Right cardiac atrium (tissue), 5 donors: ENCODE measurements at regions of chr2 and their contacts with region 1.

Region 1: DNA sequence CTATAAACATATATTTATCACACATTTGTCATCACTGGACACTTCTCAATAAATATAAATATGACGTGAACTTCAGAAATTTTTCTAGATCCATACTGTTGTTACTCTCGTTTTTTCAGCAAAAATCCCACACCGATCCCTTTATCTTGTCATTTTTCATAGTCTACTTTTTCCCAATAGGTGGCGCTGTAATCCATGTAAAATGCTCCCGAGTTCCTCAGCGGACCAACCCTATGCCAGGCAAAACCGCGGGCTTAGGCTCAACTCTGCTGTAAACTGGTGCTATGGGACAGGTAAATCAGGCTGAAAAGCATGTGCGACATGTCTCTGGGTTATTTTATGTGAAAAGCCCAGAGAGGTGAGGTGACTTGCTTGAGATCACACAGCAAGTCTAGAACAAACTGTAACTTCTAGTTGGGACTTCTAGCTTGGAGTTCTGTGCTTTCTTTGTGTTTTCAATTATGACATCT is 104.0 kb downstream of the COBLL1 start:
- DNase-seq: peak; percentile 42 to 69 (median 66)
- ATAC-seq: peak; percentile 78 to 83
- H3K4me3 ChIP-seq: peak overlapping the region; percentile 18
- H3K27ac ChIP-seq: no peak overlapping the region
- H3K4me1 ChIP-seq: peaks cover 2% of the 10 kb centered on the region
- H3K27me3 ChIP-seq: no peaks in the 10 kb centered on the region

Region 2: GRCh38 chr2:164657129-164657528 is 80.5 kb before region 1 on chr2:
- intact Hi-C with region 1: no loop called
- DNase-seq: no peak
- ATAC-seq: no peak
- H3K4me3 ChIP-seq: no peak overlapping the region
- H3K27ac ChIP-seq: no peak overlapping the region
- H3K4me1 ChIP-seq: no peaks in the 10 kb centered on the region
- H3K27me3 ChIP-seq: no peaks in the 10 kb centered on the region

Region 3: GRCh38 chr2:164697674-164698461 is 39.8 kb before region 1 on chr2:
- intact Hi-C with region 1: no loop called
- DNase-seq: no peak
- ATAC-seq: no peak
- H3K4me3 ChIP-seq: no peak overlapping the region
- H3K27ac ChIP-seq: no peak overlapping the region
- H3K4me1 ChIP-seq: no peaks in the 10 kb centered on the region
- H3K27me3 ChIP-seq: no peaks in the 10 kb centered on the region

Region 4: DNA sequence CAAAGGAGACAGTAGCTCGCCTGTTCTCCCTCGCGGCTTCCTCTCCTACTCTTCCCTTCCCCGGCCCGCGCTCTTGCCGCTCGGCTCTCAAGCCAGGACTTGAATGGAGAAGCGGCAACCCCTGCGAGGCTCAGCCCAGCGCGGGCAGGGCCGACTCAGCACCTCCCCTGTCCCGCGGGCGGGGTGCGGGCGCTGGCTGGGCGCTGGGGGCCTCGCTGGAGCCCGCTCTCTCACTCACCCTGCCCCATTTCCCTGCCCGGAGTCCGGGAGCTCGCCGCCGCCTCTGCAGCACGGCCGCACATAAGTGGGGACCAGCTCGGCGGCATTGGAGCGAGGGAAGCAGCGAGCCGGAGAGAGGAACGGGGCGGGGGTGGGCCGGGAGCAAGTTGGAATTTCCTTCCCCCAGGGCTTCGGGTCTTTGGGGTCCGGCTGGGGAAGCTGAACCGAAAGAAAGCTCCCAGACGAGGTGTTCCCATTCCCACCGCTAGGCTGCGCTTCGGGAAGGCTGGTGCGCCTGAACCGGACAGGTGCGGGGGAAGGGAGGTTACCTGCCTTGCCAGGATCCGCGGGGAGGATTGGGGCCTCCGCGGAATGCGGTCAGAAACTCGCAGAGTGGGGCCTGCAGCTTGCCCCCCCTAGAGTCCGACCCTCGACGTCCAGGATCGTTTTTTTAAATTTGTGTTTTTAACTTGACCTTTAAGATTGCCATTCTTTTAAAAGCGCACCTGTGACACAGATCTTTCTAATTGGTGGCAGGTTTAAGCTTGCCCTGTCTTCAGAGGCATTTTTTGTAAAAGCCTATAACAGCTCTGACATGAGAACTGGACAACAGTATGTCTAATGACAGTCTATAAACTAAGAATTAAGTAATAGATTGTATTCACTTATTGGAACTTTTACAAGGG is 104.3 kb after region 1 on chr2 and contains the start of gene COBLL1:
- intact Hi-C with region 1: loop called in 3 of 4 experiments (anchors 5 to 10 kb)
- DNase-seq: peak; percentile 68 to 87 (median 87)
- ATAC-seq: peak; percentile 87 to 88
- H3K4me3 ChIP-seq: peak within 1 kb of the TSS; percentile 91
- H3K27ac ChIP-seq: peak within 1 kb of the TSS; percentile 99
- H3K4me1 ChIP-seq: no peaks in the 10 kb centered on the region
- H3K27me3 ChIP-seq: no peaks in the 10 kb centered on the region
- total RNA-seq, gene COBLL1: 7.3 to 9.2 (median 8.6) TPM

Region 5: GRCh38 chr2:164910101-164910899 is 172.7 kb after region 1 on chr2:
- intact Hi-C with region 1: loop called in 3 of 4 experiments (anchors 5 kb)
- DNase-seq: no peak
- ATAC-seq: no peak
- H3K4me3 ChIP-seq: no peak overlapping the region
- H3K27ac ChIP-seq: no peak overlapping the region
- H3K4me1 ChIP-seq: peaks cover 2% of the 10 kb centered on the region
- H3K27me3 ChIP-seq: no peaks in the 10 kb centered on the region

Region 6: DNA sequence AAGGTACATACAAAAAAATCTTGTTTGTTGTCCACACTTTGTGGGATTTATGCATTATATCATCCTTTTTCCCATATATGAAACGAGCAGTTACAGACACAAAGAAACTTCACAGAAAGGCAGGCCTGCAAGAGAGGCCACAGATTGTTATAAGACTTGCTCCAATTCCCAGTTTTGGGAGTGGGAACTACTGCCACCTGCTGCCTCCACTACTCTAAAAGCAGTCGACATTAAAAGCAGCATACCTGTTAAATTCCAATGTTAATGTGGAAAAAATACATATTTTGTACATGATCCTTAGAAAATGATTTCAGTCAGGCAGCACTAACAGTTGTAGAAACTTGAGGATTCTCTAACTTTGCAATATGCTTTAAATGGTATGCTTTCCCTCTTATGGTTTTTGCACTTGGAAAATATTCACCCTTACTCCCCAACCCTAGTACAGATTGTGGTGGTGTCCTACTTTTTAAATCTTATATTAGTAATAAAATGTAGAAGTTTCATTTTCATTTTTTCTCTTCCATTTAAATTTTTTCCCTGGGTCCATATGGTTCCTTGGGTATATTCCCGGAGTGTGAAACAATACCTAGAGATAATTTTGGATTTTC is 179.8 kb after region 1 on chr2:
- intact Hi-C with region 1: loop called (anchors 2 to 5 kb)
- DNase-seq: peak; percentile 23 to 67 (median 64)
- ATAC-seq: no peak
- H3K4me3 ChIP-seq: no peak overlapping the region
- H3K27ac ChIP-seq: no peak overlapping the region
- H3K4me1 ChIP-seq: no peaks in the 10 kb centered on the region
- H3K27me3 ChIP-seq: no peaks in the 10 kb centered on the region

Region 7: DNA sequence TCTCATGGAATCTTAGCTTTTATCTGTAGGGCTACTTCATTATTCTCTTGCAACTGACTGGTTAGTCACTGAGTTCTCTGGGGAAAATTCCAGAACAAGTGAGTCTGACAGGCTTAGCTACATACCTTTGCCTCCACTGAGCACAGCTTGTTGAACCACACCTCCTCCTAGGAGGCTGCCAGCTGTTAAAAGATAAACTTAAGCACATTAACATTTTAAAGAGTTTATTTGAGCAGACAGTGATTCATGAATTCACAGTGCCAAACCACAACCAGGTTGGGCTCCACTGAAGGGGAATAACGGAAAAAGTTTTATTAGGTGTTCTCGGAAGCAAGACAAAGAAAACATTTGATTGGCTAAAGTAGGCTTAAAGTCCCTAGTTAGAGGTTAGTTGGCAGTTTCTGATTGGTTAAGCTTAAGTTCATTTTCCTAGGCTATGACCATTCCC is 230.2 kb after region 1 on chr2:
- intact Hi-C with region 1: no loop called
- DNase-seq: no peak
- ATAC-seq: no peak
- H3K4me3 ChIP-seq: no peak overlapping the region
- H3K27ac ChIP-seq: no peak overlapping the region
- H3K4me1 ChIP-seq: no peaks in the 10 kb centered on the region
- H3K27me3 ChIP-seq: no peaks in the 10 kb centered on the region